ENCODE measurements at regions of chr20 and their contacts with region 1.

Region 1: GRCh38 chr20:39874049-39874888 is 814.8 kb downstream of the MAFB start:
- H3K4me3 ChIP-seq: no peak overlapping the region
- H3K27ac ChIP-seq: no peak overlapping the region
- H3K4me1 ChIP-seq: peaks cover 7% of the 10 kb centered on the region
- CTCF ChIP-seq: peak; percentile 63

Region 2: DNA sequence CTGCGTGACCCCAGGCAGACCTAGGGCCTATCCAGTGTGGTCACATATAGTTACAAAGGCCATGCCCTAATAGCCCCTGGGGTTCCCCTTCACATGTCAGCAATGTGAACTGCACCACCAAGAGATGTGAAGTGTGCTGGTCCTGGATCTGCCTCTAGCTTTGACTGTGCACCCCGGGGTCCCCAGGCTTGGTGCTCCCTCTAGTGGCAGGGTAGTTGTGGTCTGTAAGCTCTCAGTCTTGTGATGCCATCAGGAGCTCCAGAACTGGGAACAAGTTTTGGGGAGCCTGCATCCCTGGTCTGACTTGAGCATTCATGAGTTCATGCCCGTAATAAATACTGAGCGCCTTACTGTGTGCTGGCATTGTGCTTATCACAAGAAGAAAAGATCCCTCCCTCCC is 768.7 kb before region 1 on chr20:
- CTCF ChIA-PET with region 1: no interaction called
- POLR2A ChIA-PET with region 1: no interaction called
- H3K4me3 ChIP-seq: no peak overlapping the region
- H3K27ac ChIP-seq: no peak overlapping the region
- H3K4me1 ChIP-seq: no peaks in the 10 kb centered on the region
- CTCF ChIP-seq: no peak

Region 3: DNA sequence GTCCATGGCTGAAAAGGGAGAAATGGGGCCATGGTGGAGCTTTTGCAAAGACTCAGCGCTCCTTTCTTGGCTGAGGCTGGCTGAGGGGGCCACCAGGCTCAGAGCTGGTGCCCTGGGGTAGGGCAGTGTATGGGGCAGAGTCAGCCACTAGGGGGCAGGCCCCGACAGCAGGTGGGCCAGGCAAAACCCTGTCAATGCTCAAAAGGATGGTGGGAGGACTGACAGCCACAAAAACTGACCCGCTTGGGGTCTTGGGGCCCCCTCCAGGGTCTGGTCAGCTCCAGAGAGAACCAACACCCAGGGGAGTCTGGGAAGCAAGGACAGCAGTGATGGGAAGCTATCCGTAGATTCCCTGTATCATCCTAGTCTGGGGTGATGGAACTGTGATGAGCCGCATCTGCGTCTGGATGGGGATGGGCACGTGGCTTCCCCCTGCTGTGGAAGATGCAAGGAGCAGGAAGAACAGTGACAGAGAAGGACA is 605.2 kb before region 1 on chr20:
- CTCF ChIA-PET with region 1: interaction called, 13 read pairs
- POLR2A ChIA-PET with region 1: no interaction called
- H3K4me3 ChIP-seq: no peak overlapping the region
- H3K27ac ChIP-seq: no peak overlapping the region
- H3K4me1 ChIP-seq: no peaks in the 10 kb centered on the region
- CTCF ChIP-seq: peak; percentile 87

Region 4: DNA sequence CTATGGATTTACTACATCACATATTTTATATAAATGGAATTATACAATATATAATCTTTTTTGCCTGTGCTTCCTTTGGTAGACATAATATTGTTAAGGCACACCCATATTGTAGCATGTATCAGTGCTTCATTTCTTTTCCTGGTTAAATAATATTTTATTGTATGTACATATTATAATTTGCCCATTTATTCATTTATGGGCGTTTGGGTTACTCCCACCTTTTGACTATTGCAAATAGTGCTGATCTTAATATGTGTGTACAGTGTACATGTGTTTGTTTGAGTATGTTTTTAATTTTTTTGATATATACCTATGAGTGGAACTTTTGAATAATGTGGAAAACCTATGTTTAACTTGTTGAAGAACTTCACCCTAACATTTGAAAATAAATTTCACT is 107.9 kb before region 1 on chr20:
- CTCF ChIA-PET with region 1: no interaction called
- POLR2A ChIA-PET with region 1: no interaction called
- H3K4me3 ChIP-seq: no peak overlapping the region
- H3K27ac ChIP-seq: no peak overlapping the region
- H3K4me1 ChIP-seq: no peaks in the 10 kb centered on the region
- CTCF ChIP-seq: no peak

Region 5: DNA sequence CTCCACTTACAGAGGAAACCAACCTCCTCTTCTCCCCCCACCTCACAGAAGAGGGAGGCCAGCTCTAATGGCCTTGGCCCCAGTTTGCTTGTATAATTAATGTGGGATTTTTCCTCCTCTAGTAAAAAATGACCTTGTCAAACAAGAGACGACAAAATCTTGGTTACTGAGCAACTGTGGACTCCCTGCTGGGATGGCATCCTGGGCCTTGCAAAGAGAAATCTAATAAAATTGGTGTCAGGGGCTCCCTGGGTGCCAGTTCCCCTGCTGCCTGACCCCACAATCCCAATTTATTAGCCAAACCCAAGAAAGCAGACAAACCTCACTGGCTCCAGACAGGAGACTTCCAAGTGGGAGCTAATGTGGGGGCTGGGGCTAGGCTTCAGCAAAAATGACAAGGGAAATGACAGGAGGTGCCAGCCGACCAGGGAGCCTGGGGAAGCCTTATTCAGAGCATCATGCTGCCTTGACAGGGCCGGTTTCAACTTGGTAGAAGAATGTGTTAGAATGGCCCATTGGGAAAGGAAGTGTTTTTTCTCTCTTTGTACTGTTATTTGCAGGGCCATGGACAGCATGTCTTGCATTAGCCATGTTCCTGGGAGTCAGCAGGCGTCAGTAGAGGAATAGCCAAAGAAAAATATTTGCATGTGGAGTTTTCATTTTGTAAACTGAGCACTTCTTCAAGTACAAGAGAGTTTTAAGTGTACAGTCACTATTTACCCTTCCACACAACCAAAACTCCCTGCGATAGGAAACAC is 95.2 kb before region 1 on chr20:
- CTCF ChIA-PET with region 1: no interaction called
- POLR2A ChIA-PET with region 1: no interaction called
- H3K4me3 ChIP-seq: no peak overlapping the region
- H3K27ac ChIP-seq: no peak overlapping the region
- H3K4me1 ChIP-seq: no peaks in the 10 kb centered on the region
- CTCF ChIP-seq: no peak

Region 6: DNA sequence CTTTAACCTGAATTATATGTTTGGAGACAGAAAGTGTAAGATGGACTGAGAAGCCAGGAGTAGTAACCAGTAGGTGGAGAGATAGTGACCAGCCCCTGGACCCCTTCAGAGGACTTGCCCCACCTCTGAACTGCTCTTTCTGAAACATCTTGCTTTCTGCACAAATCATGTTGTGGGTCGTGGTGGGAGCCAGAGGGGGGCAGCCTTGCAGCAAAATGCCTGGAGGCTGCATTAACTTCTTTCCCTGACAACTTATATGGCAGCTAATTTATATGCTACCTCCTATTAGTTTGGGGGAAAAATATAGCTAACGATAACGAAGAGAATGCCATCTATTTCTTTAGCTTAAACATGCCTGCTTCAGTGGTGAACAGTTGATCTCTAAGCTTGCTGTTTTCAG is 45.0 kb before region 1 on chr20:
- CTCF ChIA-PET with region 1: interaction called, 26 read pairs
- POLR2A ChIA-PET with region 1: no interaction called
- H3K4me3 ChIP-seq: no peak overlapping the region
- H3K27ac ChIP-seq: no peak overlapping the region
- H3K4me1 ChIP-seq: no peaks in the 10 kb centered on the region
- CTCF ChIP-seq: no peak

Region 7: GRCh38 chr20:39862470-39862891 is 11.8 kb before region 1 on chr20:
- CTCF ChIA-PET with region 1: interaction called, 30 read pairs
- POLR2A ChIA-PET with region 1: no interaction called
- H3K4me3 ChIP-seq: no peak overlapping the region
- H3K27ac ChIP-seq: no peak overlapping the region
- H3K4me1 ChIP-seq: 0 out of 2 replicates have a peak, but pooled peaks cover under 1% of the 10 kb centered on the region
- CTCF ChIP-seq: no peak

Measured in HEK293 (cell line).